ENCODE measurements at regions of chr11 and their contacts with region 1.

Region 1: GRCh38 chr11:102293873-102294601 is 23.2 kb upstream of the BIRC3 start:
- DNase-seq: peak in 3 of 9 experiments; percentile 40 to 86 (median 76)
- ATAC-seq: peak; percentile 94
- H3K4me3 ChIP-seq: peak overlapping the region in 1 of 2 experiments; percentile 54
- H3K4me3 Mint-ChIP-seq: peak overlapping the region; percentile 84
- H3K27ac ChIP-seq: peak overlapping the region in 1 of 2 experiments; percentile 19
- H3K27ac Mint-ChIP-seq: peak overlapping the region; percentile 88
- H3K4me1 ChIP-seq: peaks cover 8% of the 10 kb centered on the region
- H3K4me1 Mint-ChIP-seq: peaks cover 16% of the 10 kb centered on the region
- H3K27me3 ChIP-seq: no peaks in the 10 kb centered on the region
- H3K27me3 Mint-ChIP-seq: no peaks in the 10 kb centered on the region
- CTCF ChIP-seq: peak; percentile 82

Region 2: GRCh38 chr11:102306048-102306585 is 12.1 kb after region 1 on chr11:
- CTCF ChIA-PET with region 1: interaction called, 384 read pairs
- POLR2A ChIA-PET with region 1: interaction called, 8 read pairs
- intact Hi-C with region 1: no loop called
- DNase-seq: peak in 2 of 9 experiments; percentile 38 to 53
- ATAC-seq: peak; percentile 55
- H3K4me3 ChIP-seq: no peak overlapping the region
- H3K4me3 Mint-ChIP-seq: peak overlapping the region; percentile 40
- H3K27ac ChIP-seq: peak overlapping the region; percentile 33 to 62
- H3K27ac Mint-ChIP-seq: peak overlapping the region; percentile 91
- H3K4me1 ChIP-seq: peaks cover 56% of the 10 kb centered on the region
- H3K4me1 Mint-ChIP-seq: peaks cover 60% of the 10 kb centered on the region
- H3K27me3 ChIP-seq: no peaks in the 10 kb centered on the region
- H3K27me3 Mint-ChIP-seq: no peaks in the 10 kb centered on the region
- CTCF ChIP-seq: no peak

Region 3: GRCh38 chr11:102317099-102317767 is 23.2 kb after region 1 on chr11 and contains the start of gene BIRC3:
- CTCF ChIA-PET with region 1: interaction called, 384 read pairs
- POLR2A ChIA-PET with region 1: interaction called, 8 read pairs
- intact Hi-C with region 1: loop called (anchors 1 kb)
- DNase-seq: peak; percentile 76 to 99 (median 88)
- ATAC-seq: peak; percentile 85
- H3K4me3 ChIP-seq: peak within 1 kb of the TSS; percentile 68 to 80
- H3K4me3 Mint-ChIP-seq: peak within 1 kb of the TSS; percentile 90
- H3K27ac ChIP-seq: peak within 1 kb of the TSS; percentile 82 to 95
- H3K27ac Mint-ChIP-seq: peak within 1 kb of the TSS; percentile 97
- H3K4me1 ChIP-seq: peaks cover 57% of the 10 kb centered on the region
- H3K4me1 Mint-ChIP-seq: peaks cover 79% of the 10 kb centered on the region
- H3K27me3 ChIP-seq: no peaks in the 10 kb centered on the region
- H3K27me3 Mint-ChIP-seq: no peaks in the 10 kb centered on the region
- CTCF ChIP-seq: no peak
- total RNA-seq, gene BIRC3: 88.0 to 90.4 TPM

Region 4: GRCh38 chr11:102332611-102332994 is 38.6 kb after region 1 on chr11:
- CTCF ChIA-PET with region 1: interaction called, 23 read pairs
- POLR2A ChIA-PET with region 1: interaction called, 3 read pairs
- intact Hi-C with region 1: no loop called
- DNase-seq: no peak
- ATAC-seq: no peak
- H3K4me3 ChIP-seq: no peak overlapping the region
- H3K4me3 Mint-ChIP-seq: no peak overlapping the region
- H3K27ac ChIP-seq: no peak overlapping the region
- H3K27ac Mint-ChIP-seq: peak overlapping the region; percentile 47
- H3K4me1 ChIP-seq: no peaks in the 10 kb centered on the region
- H3K4me1 Mint-ChIP-seq: peaks cover 7% of the 10 kb centered on the region
- H3K27me3 ChIP-seq: no peaks in the 10 kb centered on the region
- H3K27me3 Mint-ChIP-seq: no peaks in the 10 kb centered on the region
- CTCF ChIP-seq: no peak

Region 5: DNA sequence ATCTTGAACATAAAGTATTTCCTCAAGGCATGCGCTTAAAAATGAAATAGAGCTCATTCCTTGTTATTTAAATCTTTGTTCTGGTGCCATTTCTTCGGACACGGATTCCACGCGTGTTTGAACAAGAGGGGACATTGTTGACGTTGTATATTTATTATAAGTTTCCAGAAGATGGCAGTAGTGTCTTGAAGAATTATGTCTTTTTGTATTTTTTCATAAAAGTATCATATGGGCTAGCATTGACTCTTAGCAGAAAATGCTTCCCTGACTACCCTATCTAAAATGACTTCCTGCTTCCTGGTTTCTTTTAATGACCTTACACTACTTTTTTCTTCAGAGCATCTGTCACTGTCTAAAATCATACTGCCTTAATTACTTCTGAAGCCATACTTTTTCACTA is 73.3 kb after region 1 on chr11:
- CTCF ChIA-PET with region 1: interaction called, 10 read pairs
- POLR2A ChIA-PET with region 1: no interaction called
- intact Hi-C with region 1: no loop called
- DNase-seq: peak in 2 of 9 experiments; percentile 41 to 61
- ATAC-seq: peak; percentile 77
- H3K4me3 ChIP-seq: no peak overlapping the region
- H3K4me3 Mint-ChIP-seq: no peak overlapping the region
- H3K27ac ChIP-seq: no peak overlapping the region
- H3K27ac Mint-ChIP-seq: peak overlapping the region; percentile 66
- H3K4me1 ChIP-seq: peaks cover 22% of the 10 kb centered on the region
- H3K4me1 Mint-ChIP-seq: peaks cover 42% of the 10 kb centered on the region
- H3K27me3 ChIP-seq: no peaks in the 10 kb centered on the region
- H3K27me3 Mint-ChIP-seq: no peaks in the 10 kb centered on the region
- CTCF ChIP-seq: peak; percentile 70

Region 6: GRCh38 chr11:102614485-102614884 is 320.4 kb after region 1 on chr11:
- CTCF ChIA-PET with region 1: interaction called, 15 read pairs
- POLR2A ChIA-PET with region 1: interaction called, 3 read pairs
- intact Hi-C with region 1: loop called in 1 of 2 experiments (anchors 2 kb)
- DNase-seq: peak in 1 of 9 experiments; percentile 9
- ATAC-seq: no peak
- H3K4me3 ChIP-seq: no peak overlapping the region
- H3K4me3 Mint-ChIP-seq: no peak overlapping the region
- H3K27ac ChIP-seq: no peak overlapping the region
- H3K27ac Mint-ChIP-seq: no peak overlapping the region
- H3K4me1 ChIP-seq: no peaks in the 10 kb centered on the region
- H3K4me1 Mint-ChIP-seq: peaks cover 3% of the 10 kb centered on the region
- H3K27me3 ChIP-seq: no peaks in the 10 kb centered on the region
- H3K27me3 Mint-ChIP-seq: no peaks in the 10 kb centered on the region
- CTCF ChIP-seq: no peak